ENCODE measurements at regions of chrX and their contacts with region 1.

Region 1: GRCh38 chrX:138756234-138756633 is 44.7 kb upstream of the FGF13 start:
- DNase-seq: peak in 4 of 5 donors; percentile 5 to 26 (median 19)
- ATAC-seq: peak in 3 of 4 donors; percentile 64 to 77 (median 76)
- H3K4me3 ChIP-seq: no peak overlapping the region
- H3K27ac ChIP-seq: no peak overlapping the region
- H3K4me1 ChIP-seq: no peaks in the 10 kb centered on the region
- H3K27me3 ChIP-seq: peaks cover 0 to 17% (median 0%) of the 10 kb centered on the region in 9 donors
- CTCF ChIP-seq: peak in 6 of 12 donors; percentile 13 to 40 (median 24)
- POLR2A ChIP-seq: no peak

Region 2: GRCh38 chrX:139559383-139560042 is 803.3 kb after region 1 on chrX:
- intact Hi-C with region 1: loop called in 1 of 10 experiments (anchors 10 kb)
- DNase-seq: peak in 1 of 5 donors; percentile 16
- ATAC-seq: peak in 1 of 4 donors; percentile 70
- H3K4me3 ChIP-seq: no peak overlapping the region
- H3K27ac ChIP-seq: no peak overlapping the region
- H3K4me1 ChIP-seq: no peaks in the 10 kb centered on the region
- H3K27me3 ChIP-seq: peaks cover 0 to 22% (median 0%) of the 10 kb centered on the region in 9 donors
- CTCF ChIP-seq: peak; percentile 23 to 53 (median 40)
- POLR2A ChIP-seq: no peak